ENCODE measurements at regions of chr12 and their contacts with region 1.

Region 1: GRCh38 chr12:94101738-94102660 is 46.4 kb upstream of the PLXNC1 start:
- DNase-seq: peak in 1 of 2 donors; percentile 90
- H3K4me3 ChIP-seq: peak overlapping the region; percentile 64 to 71
- H3K27ac ChIP-seq: peak overlapping the region; percentile 79
- H3K4me1 ChIP-seq: peaks cover 13% of the 10 kb centered on the region
- H3K27me3 ChIP-seq: no peaks in the 10 kb centered on the region
- CTCF ChIP-seq: peak; percentile 79 to 88 (median 86)
- POLR2A ChIP-seq: no peak

Region 2: GRCh38 chr12:93502802-93503623 is 599.0 kb before region 1 on chr12:
- intact Hi-C with region 1: loop called (anchors 2 kb)
- DNase-seq: no peak
- H3K4me3 ChIP-seq: no peak overlapping the region
- H3K27ac ChIP-seq: no peak overlapping the region
- H3K4me1 ChIP-seq: no peaks in the 10 kb centered on the region
- H3K27me3 ChIP-seq: no peaks in the 10 kb centered on the region
- CTCF ChIP-seq: peak; percentile 67 to 76 (median 69)
- POLR2A ChIP-seq: no peak

Region 3: DNA sequence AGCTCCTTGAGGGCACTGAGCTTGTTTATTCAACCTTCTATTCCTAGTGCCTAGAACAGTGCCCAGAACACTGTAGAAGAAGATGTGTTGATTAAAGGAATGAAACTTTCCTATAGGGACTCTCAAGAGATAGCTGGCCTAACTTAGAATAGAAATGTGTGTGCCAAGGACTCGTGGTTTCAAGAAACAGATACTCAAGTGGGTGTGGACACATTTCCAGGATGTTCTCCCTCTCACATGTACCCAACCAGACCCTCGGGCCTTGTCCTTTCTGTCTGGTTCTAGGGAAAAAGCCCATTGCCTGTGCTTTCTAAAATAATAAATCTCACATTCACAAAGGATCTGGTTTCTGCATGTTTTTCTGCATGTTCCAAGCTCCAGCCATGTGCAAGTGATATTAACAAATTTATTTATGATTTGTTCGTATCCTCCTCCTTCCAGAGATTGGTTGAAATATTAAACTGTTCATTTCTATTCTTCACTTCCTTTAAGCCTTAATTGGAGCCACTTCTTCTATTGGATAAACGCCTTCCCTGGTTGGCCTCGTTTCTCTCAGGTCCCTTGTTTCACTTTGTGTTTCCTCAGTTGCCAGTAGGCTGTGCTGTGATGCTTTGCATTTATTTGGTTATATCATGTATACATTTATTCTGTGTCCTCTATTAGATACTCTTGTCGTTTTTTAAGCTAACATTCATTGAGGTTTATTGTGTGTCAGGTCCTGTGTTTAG is 335.0 kb before region 1 on chr12:
- intact Hi-C with region 1: loop called (anchors 10 kb)
- DNase-seq: no peak
- H3K4me3 ChIP-seq: no peak overlapping the region
- H3K27ac ChIP-seq: peak overlapping the region; percentile 36
- H3K4me1 ChIP-seq: peaks cover 19% of the 10 kb centered on the region
- H3K27me3 ChIP-seq: no peaks in the 10 kb centered on the region
- CTCF ChIP-seq: peak; percentile 22 to 57 (median 31)
- POLR2A ChIP-seq: no peak

Region 4: GRCh38 chr12:93894391-93895088 is 207.5 kb before region 1 on chr12:
- intact Hi-C with region 1: loop called (anchors 10 kb)
- DNase-seq: peak in 1 of 2 donors; percentile 90
- H3K4me3 ChIP-seq: peak overlapping the region; percentile 17 to 30
- H3K27ac ChIP-seq: peak overlapping the region; percentile 61
- H3K4me1 ChIP-seq: peaks cover 14% of the 10 kb centered on the region
- H3K27me3 ChIP-seq: no peaks in the 10 kb centered on the region
- CTCF ChIP-seq: no peak
- POLR2A ChIP-seq: no peak